ENCODE measurements at regions of chr12 and their contacts with region 1.

Region 1: GRCh38 chr12:80230068-80230467 is 130.7 kb downstream of the OTOGL start:
- DNase-seq: peak; percentile 61
- H3K4me3 ChIP-seq: no peak overlapping the region
- H3K27ac ChIP-seq: no peak overlapping the region
- H3K4me1 ChIP-seq: peaks cover 25% of the 10 kb centered on the region
- H3K27me3 ChIP-seq: no peaks in the 10 kb centered on the region
- CTCF ChIP-seq: no peak
- POLR2A ChIP-seq: no peak

Region 2: GRCh38 chr12:78888568-78888967 is 1341.5 kb before region 1 on chr12:
- CTCF ChIA-PET with region 1: no interaction called
- POLR2A ChIA-PET with region 1: no interaction called
- dilution Hi-C with region 1: no loop called
- intact Hi-C with region 1: loop called (anchors 10 kb)
- DNase-seq: no peak
- H3K4me3 ChIP-seq: no peak overlapping the region
- H3K27ac ChIP-seq: peak overlapping the region; percentile 11
- H3K4me1 ChIP-seq: peaks cover 29% of the 10 kb centered on the region
- H3K27me3 ChIP-seq: no peaks in the 10 kb centered on the region
- CTCF ChIP-seq: no peak
- POLR2A ChIP-seq: no peak

Region 3: GRCh38 chr12:80241576-80242273 is 11.7 kb after region 1 on chr12:
- CTCF ChIA-PET with region 1: interaction called, 14 read pairs
- POLR2A ChIA-PET with region 1: no interaction called
- dilution Hi-C with region 1: no loop called
- intact Hi-C with region 1: loop called (anchors 1 kb)
- DNase-seq: peak; percentile 67
- H3K4me3 ChIP-seq: peak overlapping the region in 1 of 3 experiments; percentile 33
- H3K27ac ChIP-seq: peak overlapping the region; percentile 74
- H3K4me1 ChIP-seq: peaks cover 22% of the 10 kb centered on the region
- H3K27me3 ChIP-seq: no peaks in the 10 kb centered on the region
- CTCF ChIP-seq: no peak
- POLR2A ChIP-seq: no peak

Region 4: GRCh38 chr12:80373666-80374065 is 143.6 kb after region 1 on chr12:
- CTCF ChIA-PET with region 1: no interaction called
- POLR2A ChIA-PET with region 1: no interaction called
- dilution Hi-C with region 1: no loop called
- intact Hi-C with region 1: no loop called
- DNase-seq: no peak
- H3K4me3 ChIP-seq: no peak overlapping the region
- H3K27ac ChIP-seq: no peak overlapping the region
- H3K4me1 ChIP-seq: no peaks in the 10 kb centered on the region
- H3K27me3 ChIP-seq: no peaks in the 10 kb centered on the region
- CTCF ChIP-seq: no peak
- POLR2A ChIP-seq: no peak